ENCODE measurements at regions of chr3 and their contacts with region 1.

Region 1: GRCh38 chr3:12175844-12176453 is 17.2 kb upstream of the TIMP4 start:
- DNase-seq: peak; percentile 28
- ATAC-seq: peak; percentile 87
- H3K4me3 ChIP-seq: no peak overlapping the region
- H3K27ac ChIP-seq: no peak overlapping the region
- H3K4me1 ChIP-seq: peaks cover 12 to 40% of the 10 kb centered on the region in 2 experiments
- H3K27me3 ChIP-seq: no peaks in the 10 kb centered on the region
- CTCF ChIP-seq: peak; percentile 71 to 90 (median 85)
- POLR2A ChIP-seq: no peak
- RAD21 ChIP-seq: peak; percentile 94

Region 2: DNA sequence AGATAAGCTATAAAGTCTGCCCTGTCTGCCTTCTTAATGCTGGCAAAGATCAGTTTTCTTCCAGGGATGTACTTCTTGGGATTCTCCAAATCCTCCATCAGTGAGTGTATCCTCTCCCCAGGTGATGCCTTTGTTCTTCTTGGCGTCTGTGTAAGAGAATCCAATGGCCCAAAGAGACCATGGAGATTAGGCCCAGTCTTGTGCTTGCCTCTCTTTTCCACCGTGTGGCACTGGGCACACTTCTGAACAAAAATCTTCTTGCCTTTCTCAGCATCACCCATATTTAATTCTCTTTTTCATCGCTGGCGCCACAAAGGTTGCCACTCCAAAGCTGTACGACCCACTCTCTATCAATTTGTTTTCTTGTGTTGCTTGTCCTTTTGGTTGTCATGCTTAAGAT is 297.1 kb before region 1 on chr3:
- CTCF ChIA-PET with region 1: no interaction called
- POLR2A ChIA-PET with region 1: no interaction called
- RAD21 ChIA-PET with region 1: no interaction called
- intact Hi-C with region 1: loop called (anchors 10 kb)
- DNase-seq: peak; percentile 21
- ATAC-seq: peak; percentile 72
- H3K4me3 ChIP-seq: no peak overlapping the region
- H3K27ac ChIP-seq: no peak overlapping the region
- H3K4me1 ChIP-seq: no peaks in the 10 kb centered on the region
- H3K27me3 ChIP-seq: no peaks in the 10 kb centered on the region
- CTCF ChIP-seq: peak in 2 of 3 experiments; percentile 28 to 30; a peak in 3 of 6 replicates
- POLR2A ChIP-seq: no peak
- RAD21 ChIP-seq: peak; percentile 50

Region 3: GRCh38 chr3:12135029-12135657 is 40.8 kb before region 1 on chr3:
- CTCF ChIA-PET with region 1: interaction called, 75 read pairs
- POLR2A ChIA-PET with region 1: no interaction called
- RAD21 ChIA-PET with region 1: interaction called, 10 to 13 read pairs
- intact Hi-C with region 1: loop called (anchors 1 kb)
- DNase-seq: peak; percentile 34
- ATAC-seq: peak; percentile 96
- H3K4me3 ChIP-seq: no peak overlapping the region
- H3K27ac ChIP-seq: no peak overlapping the region
- H3K4me1 ChIP-seq: no peaks in the 10 kb centered on the region
- H3K27me3 ChIP-seq: no peaks in the 10 kb centered on the region
- CTCF ChIP-seq: peak; percentile 84 to 94 (median 90)
- POLR2A ChIP-seq: no peak
- RAD21 ChIP-seq: peak; percentile 96